Psoas muscle (tissue), 8 donors: ENCODE measurements at regions of chr15 and their contacts with region 1.

Region 1: GRCh38 chr15:81274931-81275707 is 48.8 kb downstream of the STARD5 start:
- DNase-seq: peak; percentile 68 to 81
- ATAC-seq: peak; percentile 71 to 85 (median 82)
- H3K4me3 ChIP-seq: no peak overlapping the region
- H3K27ac ChIP-seq: no peak overlapping the region
- H3K4me1 ChIP-seq: no peaks in the 10 kb centered on the region
- H3K27me3 ChIP-seq: no peaks in the 10 kb centered on the region
- CTCF ChIP-seq: peak; percentile 79

Region 2: DNA sequence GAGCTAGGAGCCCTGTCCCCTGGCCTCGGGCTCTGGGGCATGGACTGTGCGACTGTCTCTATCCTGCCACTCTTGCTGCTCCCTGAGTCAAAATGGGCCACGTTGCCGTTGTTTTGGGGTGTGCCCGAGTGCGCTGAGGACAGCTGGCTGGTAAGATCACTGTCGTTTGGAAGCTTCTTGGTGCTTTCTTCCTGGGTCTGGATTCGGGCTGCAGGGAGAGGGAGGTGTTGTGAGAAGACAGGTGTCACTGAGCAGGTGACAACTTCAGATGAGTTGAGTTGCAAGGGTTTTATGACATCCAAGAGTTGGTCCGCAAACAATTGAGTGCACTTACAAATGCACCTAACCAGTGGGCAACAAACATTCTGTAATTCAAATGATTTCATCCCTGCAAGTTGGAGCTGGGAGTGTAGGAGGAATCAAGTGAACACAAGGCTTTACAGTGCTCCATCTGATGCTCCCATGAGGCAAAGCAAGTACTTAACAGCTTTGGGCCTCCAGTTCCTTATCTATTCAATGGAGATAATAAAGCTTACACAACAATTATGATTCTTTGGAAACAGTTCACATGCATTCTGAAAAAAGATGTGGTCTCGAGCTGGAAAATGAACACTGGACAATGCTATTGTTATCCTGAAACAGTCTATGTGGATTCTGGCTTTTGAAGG is 59.8 kb after region 1 on chr15:
- intact Hi-C with region 1: loop called in 1 of 2 experiments (anchors 5 kb)
- DNase-seq: no peak
- ATAC-seq: no peak
- H3K4me3 ChIP-seq: no peak overlapping the region
- H3K27ac ChIP-seq: no peak overlapping the region
- H3K4me1 ChIP-seq: no peaks in the 10 kb centered on the region
- H3K27me3 ChIP-seq: peaks cover 0 to 10% (median 0%) of the 10 kb centered on the region in 3 donors
- CTCF ChIP-seq: no peak

Region 3: GRCh38 chr15:81394603-81395002 is 119.5 kb after region 1 on chr15:
- intact Hi-C with region 1: loop called in 1 of 2 experiments (anchors 5 kb)
- DNase-seq: no peak
- ATAC-seq: no peak
- H3K4me3 ChIP-seq: no peak overlapping the region
- H3K27ac ChIP-seq: no peak overlapping the region
- H3K4me1 ChIP-seq: no peaks in the 10 kb centered on the region
- H3K27me3 ChIP-seq: no peaks in the 10 kb centered on the region
- CTCF ChIP-seq: no peak

Region 4: GRCh38 chr15:81400640-81401236 is 125.6 kb after region 1 on chr15:
- intact Hi-C with region 1: loop called in 1 of 2 experiments (anchors 1 kb)
- DNase-seq: no peak
- ATAC-seq: no peak
- H3K4me3 ChIP-seq: no peak overlapping the region
- H3K27ac ChIP-seq: no peak overlapping the region
- H3K4me1 ChIP-seq: no peaks in the 10 kb centered on the region
- H3K27me3 ChIP-seq: peaks cover 0 to 2% (median 0%) of the 10 kb centered on the region in 3 donors
- CTCF ChIP-seq: peak; percentile 53

Region 5: DNA sequence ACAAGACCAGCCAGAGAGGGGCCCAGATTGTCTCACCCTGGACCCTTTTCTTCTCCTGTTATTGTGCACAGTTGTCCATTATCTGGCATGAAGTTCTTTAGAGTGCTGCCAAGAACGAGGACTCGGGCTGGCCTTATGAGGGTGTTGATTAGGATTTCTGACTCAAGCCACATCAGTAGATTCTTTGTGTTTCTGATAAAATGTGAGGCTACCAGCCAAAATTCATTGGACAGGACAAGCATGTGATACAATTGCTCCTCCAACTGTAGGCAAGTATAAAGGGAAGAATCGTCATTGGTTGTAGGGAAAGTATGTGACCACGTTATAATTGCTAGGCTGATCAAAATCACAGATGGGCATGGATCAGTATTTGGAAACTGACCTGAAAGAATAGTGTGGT is 198.1 kb after region 1 on chr15:
- intact Hi-C with region 1: loop called in 1 of 2 experiments (anchors 10 kb)
- DNase-seq: no peak
- ATAC-seq: no peak
- H3K4me3 ChIP-seq: no peak overlapping the region
- H3K27ac ChIP-seq: no peak overlapping the region
- H3K4me1 ChIP-seq: no peaks in the 10 kb centered on the region
- H3K27me3 ChIP-seq: peaks cover 0 to 4% (median 0%) of the 10 kb centered on the region in 3 donors
- CTCF ChIP-seq: no peak